ENCODE measurements at regions of chr11 and their contacts with region 1.

Region 1: GRCh38 chr11:114159802-114160632 is 100.5 kb downstream of the ZBTB16 start:
- DNase-seq: peak; percentile 100
- H3K4me3 Mint-ChIP-seq: peak overlapping the region; percentile 65
- H3K27ac Mint-ChIP-seq: peak overlapping the region; percentile 99
- H3K4me1 Mint-ChIP-seq: peaks cover 87% of the 10 kb centered on the region
- H3K27me3 Mint-ChIP-seq: no peaks in the 10 kb centered on the region
- CTCF ChIP-seq: peak; percentile 15

Region 2: DNA sequence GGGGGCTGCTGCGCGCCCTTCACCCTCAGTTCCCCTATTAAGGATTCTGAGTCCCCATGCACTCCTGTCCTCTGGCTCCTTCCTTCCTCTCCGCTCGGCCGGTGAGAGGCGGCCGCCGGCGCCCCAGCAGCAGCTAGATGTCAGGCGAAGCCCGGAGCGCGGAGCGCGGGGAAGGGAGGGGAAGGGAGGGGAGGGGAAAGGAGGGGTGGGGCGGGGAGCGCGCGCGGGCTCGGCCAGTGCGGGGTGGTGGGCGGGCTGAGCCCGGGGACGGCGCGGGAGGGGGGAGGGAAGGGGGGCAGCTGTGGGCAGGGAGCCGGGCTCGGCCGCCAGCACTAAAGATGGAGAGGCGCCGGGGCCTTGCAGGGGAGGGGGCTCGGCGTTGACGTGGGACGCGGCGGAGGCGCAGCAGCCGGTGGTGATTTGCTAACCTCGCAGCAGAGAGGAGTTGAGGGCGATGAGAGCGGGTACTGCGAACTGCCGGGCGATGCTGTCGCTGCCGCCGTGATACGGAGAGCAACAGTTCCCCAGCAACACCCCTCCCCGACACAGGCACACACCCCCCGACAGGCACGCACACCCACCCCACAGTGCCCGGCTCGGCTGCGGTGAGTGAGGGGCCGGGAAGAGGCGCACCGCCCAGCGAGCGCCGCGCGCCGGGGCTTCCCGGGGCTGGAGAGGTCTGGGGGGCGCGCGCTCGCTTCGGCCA is 100.6 kb before region 1 on chr11 and contains the start of gene ZBTB16:
- CTCF ChIA-PET with region 1: no interaction called
- POLR2A ChIA-PET with region 1: interaction called, 31 read pairs
- intact Hi-C with region 1: loop called (anchors 1 kb)
- DNase-seq: peak; percentile 86
- H3K4me3 Mint-ChIP-seq: peak within 1 kb of the TSS; percentile 95
- H3K27ac Mint-ChIP-seq: peak within 1 kb of the TSS; percentile 98
- H3K4me1 Mint-ChIP-seq: peaks cover 12% of the 10 kb centered on the region
- H3K27me3 Mint-ChIP-seq: no peaks in the 10 kb centered on the region
- CTCF ChIP-seq: peak; percentile 28
- total RNA-seq, gene ZBTB16: 70.4 and 75.3 TPM in 2 replicates

Region 3: DNA sequence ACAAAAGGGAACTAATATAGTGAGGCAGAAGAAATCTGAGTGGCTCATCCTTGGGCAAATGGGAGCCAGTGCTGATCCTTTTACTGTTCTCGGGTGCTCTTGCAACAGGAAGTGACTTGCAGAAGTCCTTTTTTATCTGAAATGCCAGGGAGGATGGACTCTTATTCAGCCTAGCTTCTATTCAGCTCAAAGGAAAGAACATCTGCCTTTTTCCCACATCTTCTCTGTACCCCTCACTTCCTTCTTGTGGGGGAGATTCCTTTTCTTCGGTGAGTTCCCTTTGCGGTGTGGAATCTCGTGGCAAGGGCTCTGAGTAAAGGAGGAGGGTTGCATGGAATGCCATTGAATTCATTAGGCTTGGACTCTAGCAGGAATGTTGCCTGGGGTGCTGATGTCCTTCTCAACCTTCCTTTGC is 24.3 kb before region 1 on chr11:
- CTCF ChIA-PET with region 1: no interaction called
- POLR2A ChIA-PET with region 1: interaction called, 19 read pairs
- intact Hi-C with region 1: no loop called
- DNase-seq: no peak
- H3K4me3 Mint-ChIP-seq: no peak overlapping the region
- H3K27ac Mint-ChIP-seq: peak overlapping the region; percentile 86
- H3K4me1 Mint-ChIP-seq: peaks cover 64% of the 10 kb centered on the region
- H3K27me3 Mint-ChIP-seq: no peaks in the 10 kb centered on the region
- CTCF ChIP-seq: no peak

Region 4: DNA sequence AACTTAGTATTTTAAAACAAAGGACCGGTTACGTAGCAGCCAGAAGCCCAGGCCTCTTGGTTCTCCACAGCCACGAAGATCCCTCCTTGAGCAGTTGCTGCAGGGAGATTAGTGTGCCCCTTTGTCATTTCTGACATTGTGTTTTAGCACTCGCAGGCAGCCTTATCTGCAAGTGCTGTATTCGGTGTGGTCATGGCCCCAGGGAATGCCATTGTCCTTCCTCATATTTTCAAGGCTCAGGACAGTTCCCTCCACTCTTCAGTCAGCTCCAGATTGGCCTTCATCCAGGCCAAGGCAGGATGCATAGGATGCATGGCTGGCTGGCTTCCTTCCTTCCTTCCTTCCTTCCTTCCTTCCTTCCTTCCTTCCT is 12.0 kb before region 1 on chr11:
- CTCF ChIA-PET with region 1: no interaction called
- POLR2A ChIA-PET with region 1: interaction called, 79 read pairs
- intact Hi-C with region 1: no loop called
- DNase-seq: no peak
- H3K4me3 Mint-ChIP-seq: no peak overlapping the region
- H3K27ac Mint-ChIP-seq: peak overlapping the region; percentile 99
- H3K4me1 Mint-ChIP-seq: peaks cover 72% of the 10 kb centered on the region
- H3K27me3 Mint-ChIP-seq: no peaks in the 10 kb centered on the region
- CTCF ChIP-seq: no peak

Region 5: DNA sequence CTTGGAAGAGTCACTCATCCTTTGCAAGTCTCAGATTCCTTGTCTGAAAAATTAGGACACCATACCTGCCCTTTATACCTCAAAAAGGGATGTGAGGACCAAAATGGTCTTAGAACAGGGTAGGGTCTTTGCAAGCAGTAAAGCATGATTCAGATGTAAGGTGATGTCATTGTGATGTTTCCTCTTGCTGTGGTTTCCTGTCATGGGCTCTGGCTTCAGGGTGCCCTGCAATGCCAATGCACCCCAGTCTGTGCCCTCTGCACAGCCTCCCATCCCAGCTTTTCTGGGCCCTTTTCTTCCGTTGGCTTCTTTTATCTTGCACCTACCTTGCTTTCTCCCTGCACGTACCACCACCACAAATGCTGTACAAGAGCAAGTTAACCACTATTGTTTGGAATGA is 48.4 kb after region 1 on chr11:
- CTCF ChIA-PET with region 1: no interaction called
- POLR2A ChIA-PET with region 1: no interaction called
- intact Hi-C with region 1: no loop called
- DNase-seq: no peak
- H3K4me3 Mint-ChIP-seq: no peak overlapping the region
- H3K27ac Mint-ChIP-seq: peak overlapping the region; percentile 69
- H3K4me1 Mint-ChIP-seq: peaks cover 31% of the 10 kb centered on the region
- H3K27me3 Mint-ChIP-seq: no peaks in the 10 kb centered on the region
- CTCF ChIP-seq: no peak

Region 6: GRCh38 chr11:114250993-114251814 is 91.2 kb after region 1 on chr11:
- CTCF ChIA-PET with region 1: no interaction called
- POLR2A ChIA-PET with region 1: no interaction called
- intact Hi-C with region 1: no loop called
- DNase-seq: no peak
- H3K4me3 Mint-ChIP-seq: no peak overlapping the region
- H3K27ac Mint-ChIP-seq: peak overlapping the region; percentile 54
- H3K4me1 Mint-ChIP-seq: peaks cover 19% of the 10 kb centered on the region
- H3K27me3 Mint-ChIP-seq: no peaks in the 10 kb centered on the region
- CTCF ChIP-seq: no peak

Region 7: DNA sequence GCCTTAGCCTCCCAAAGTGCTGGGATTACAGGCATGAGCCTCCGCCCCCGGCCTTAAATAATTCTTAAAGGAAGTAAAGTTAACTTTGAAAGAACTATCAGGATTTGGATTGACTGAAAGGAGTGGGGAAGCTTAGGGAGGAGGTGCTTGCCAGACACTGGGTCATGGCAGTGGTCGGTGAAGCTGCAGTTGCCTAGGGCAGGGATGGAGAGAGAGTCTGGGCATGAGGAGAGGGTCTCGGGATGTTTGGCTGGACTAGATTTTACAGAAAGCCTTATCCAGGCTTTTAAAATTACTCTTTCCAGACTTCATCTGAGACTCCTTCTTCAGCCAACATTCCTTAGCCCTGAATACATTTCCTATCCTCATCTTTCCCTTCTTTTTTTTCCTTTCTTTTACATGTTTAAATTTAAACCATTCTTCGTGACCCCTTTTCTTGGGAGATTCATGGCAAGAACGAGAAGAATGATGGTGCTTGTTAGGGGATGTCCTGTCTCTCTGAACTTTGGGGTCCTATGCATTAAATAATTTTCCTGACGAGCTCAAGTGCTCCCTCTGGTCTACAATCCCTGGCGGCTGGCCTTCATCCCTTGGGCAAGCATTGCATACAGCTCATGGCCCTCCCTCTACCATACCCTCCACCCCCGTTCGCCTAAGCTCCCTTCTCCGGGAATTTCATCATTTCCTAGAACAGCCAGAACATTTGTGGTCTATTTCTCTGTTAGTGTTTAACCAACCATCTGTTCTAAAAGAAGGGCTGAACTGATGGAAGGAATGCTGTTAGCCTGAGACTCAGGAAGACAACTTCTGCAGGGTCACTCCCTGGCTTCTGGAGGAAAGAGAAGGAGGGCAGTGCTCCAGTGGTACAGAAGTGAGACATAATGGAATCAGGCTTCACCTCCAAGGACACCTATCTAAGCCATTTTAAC is 135.9 kb after region 1 on chr11 and contains the start of gene NNMT:
- CTCF ChIA-PET with region 1: no interaction called
- POLR2A ChIA-PET with region 1: interaction called, 56 read pairs
- intact Hi-C with region 1: no loop called
- DNase-seq: peak; percentile 99
- H3K4me3 Mint-ChIP-seq: peak within 1 kb of the TSS; percentile 78
- H3K27ac Mint-ChIP-seq: peak within 1 kb of the TSS; percentile 98
- H3K4me1 Mint-ChIP-seq: peaks cover 37% of the 10 kb centered on the region
- H3K27me3 Mint-ChIP-seq: no peaks in the 10 kb centered on the region
- CTCF ChIP-seq: no peak
- total RNA-seq, gene NNMT: 429 and 638 TPM in 2 replicates

Measured in MCF 10A (cell line).